HEK293T (cell line): ENCODE measurements at regions of chr10 and their contacts with region 1.

Region 1: DNA sequence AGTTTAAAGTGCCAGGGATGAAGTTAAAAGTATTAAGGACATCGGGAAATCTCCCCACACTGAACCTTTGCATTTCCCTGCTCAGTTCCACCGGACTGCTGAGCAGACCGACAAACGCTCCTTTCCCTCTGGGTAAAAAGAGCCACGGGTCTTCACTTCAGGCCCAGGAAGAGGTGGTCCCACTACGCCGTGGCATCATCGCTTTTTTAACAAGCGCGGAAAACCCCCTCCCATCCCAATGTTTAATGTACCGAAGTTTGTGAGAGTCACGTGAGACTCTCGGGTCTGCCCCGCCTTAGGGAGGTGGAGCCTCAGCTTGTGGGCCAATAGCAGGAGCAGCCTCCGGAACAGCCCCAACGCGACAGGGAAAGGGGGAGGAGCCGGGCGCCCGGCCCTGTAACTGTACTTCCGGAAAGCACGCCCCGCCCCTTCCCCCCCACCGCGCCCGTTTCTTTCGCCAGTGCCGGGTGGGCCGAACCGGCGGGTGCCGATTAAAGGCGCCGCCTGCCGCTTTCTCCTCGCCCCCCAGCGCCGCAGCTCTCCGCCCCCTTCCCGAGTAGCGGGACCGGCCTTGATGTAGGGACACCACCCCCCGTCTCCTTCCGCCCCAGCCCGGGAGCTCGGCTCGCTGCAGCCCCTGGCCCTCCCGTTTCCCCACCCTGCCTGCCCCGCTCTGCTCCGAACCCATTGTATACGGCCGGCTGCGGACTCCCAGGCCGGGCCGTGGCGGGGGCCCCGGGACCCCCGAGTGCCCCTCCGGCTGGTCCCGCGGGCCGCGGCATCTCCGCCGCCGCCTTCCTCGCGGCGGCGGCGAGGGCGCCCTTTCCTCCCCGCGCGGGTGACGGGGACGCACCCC is 2.2 kb upstream of the TRIM8 start:
- DNase-seq: peak; percentile 95

Region 2: DNA sequence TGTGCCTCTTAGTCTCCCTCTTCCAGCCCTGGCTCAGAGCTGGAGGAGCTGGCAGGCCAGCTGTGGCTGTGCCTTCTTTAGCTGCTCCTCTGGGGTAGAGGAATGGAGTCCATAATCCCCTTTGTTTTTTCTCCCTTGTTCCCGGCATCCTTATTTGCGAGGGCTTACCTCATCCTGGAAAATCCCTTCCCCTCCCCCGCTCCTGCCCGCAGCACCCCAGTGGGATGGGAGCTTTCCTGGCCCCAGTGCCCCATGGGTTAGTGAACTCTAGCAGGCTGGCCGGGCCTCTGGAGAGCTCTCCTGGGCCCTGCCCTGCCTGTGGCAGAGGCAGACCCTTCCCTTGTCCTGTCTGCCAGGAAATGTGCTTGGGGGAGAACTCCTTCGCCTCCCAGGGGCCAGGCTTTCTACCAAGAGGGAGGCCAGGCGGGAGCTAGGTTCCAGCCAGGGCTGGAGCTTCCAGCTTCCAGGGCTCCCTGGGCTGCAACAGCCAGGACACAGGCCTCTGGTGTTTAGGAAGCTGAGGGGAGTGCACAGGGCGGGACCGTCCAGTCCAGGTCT is 14.3 kb before region 1 on chr10:
- CTCF ChIA-PET with region 1: no interaction called
- POLR2A ChIA-PET with region 1: interaction called, 10 read pairs
- DNase-seq: no peak

Region 3: DNA sequence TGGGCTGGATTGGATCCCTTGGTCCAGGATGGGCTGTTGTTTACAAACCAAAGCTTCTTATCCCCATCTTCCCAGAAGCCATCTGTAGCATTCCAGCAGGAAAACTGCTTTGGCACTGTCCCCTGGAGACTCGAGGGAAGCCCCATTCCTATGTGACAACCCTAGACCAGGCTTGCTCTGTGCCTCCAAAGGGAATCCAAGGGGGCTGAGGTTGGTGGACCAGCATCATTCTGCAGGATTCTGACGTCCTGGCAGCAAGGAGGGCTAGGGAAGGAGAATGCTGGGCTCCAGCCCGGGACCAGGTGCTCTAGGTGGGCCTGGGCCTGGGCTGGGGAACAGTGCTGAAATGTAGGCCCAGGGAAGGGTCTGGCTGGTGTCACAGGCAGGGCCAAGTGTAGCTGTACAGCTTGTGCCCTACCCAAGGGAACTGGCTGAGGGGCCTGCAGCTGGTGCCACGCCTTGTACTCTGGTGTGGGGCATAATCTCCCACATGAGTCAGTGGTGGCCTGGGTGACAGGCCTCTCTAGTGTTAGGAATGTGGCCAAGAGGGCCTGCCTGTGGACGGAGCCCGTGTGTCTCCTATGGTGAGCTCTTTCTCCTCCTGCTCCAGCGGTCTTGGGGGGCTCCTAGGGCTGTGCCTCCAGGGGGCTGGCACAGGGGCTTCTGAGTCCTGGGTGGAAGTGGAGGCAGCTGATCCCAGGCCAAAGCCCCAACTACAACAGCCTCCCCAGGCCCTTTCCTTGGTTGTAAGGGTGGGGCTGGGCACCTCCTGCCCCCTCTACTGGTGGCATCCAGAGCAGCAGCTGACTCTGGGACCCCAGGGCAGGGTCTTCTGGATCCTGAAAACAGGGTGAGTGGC is 27.3 kb after region 1 on chr10:
- CTCF ChIA-PET with region 1: interaction called, 4 read pairs
- POLR2A ChIA-PET with region 1: interaction called, 24 read pairs
- DNase-seq: peak; percentile 65

Region 4: GRCh38 chr10:102713814-102714620 is 71.9 kb after region 1 on chr10 and contains the start of gene ARL3:
- CTCF ChIA-PET with region 1: no interaction called
- POLR2A ChIA-PET with region 1: interaction called, 17 read pairs
- DNase-seq: peak; percentile 96

Region 5: DNA sequence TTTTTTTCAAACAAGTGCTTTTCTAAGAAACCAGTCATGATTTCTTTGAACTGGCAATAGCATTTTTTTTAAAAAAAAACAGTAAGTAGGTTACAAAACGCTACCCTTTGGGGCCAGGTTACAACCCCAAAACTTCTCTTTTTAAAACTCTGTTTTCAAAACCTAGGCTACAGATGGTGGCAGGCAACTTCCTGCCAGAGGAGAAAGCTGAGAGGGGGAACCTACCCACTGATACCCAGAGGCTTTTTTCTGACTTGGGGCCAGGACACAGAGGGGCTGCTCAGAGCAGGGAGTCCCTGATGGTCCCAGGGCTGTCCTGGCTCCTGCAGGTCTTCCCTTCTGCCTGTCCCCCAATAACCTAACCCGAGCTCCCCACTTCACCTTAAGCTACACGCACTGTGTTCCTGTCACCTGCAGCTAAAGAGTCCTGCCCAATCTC is 1268.9 kb after region 1 on chr10:
- CTCF ChIA-PET with region 1: no interaction called
- POLR2A ChIA-PET with region 1: no interaction called
- DNase-seq: no peak